Activated CD4-positive, alpha-beta T cell treated with anti-CD3 and anti-CD28 coated beads for 36 hours (primary cell): ENCODE measurements at regions of chr2 and their contacts with region 1.

Region 1: DNA sequence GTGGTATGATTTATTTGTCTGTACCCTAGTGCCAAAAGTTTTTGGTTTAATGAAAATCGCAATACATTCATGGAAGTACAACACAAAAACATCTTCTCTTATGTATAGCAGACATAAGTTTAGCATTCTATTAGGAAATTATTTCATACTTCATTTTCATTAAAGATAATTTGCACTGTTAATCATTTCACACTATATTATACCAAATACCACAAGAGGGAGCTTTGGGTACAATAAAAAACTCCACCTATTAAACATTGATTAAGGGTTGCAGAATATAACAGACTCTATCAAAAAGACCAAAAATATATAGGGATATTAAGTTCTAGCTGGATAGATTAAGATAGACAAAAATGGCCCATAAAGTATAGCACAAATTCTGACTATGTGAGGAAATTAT is 79.0 kb downstream of the SLC66A3 start:
- DNase-seq: no peak
- ATAC-seq: no peak
- H3K4me3 Mint-ChIP-seq: no peak overlapping the region
- H3K27ac Mint-ChIP-seq: no peak overlapping the region
- H3K4me1 Mint-ChIP-seq: peaks cover 11% of the 10 kb centered on the region
- H3K27me3 Mint-ChIP-seq: no peaks in the 10 kb centered on the region

Region 2: GRCh38 chr2:10995366-10995970 is 238.8 kb before region 1 on chr2:
- CTCF ChIA-PET with region 1: no interaction called
- POLR2A ChIA-PET with region 1: no interaction called
- intact Hi-C with region 1: no loop called
- DNase-seq: no peak
- ATAC-seq: no peak
- H3K4me3 Mint-ChIP-seq: no peak overlapping the region
- H3K27ac Mint-ChIP-seq: no peak overlapping the region
- H3K4me1 Mint-ChIP-seq: no peaks in the 10 kb centered on the region
- H3K27me3 Mint-ChIP-seq: no peaks in the 10 kb centered on the region

Region 3: GRCh38 chr2:11344342-11344955 is 110.1 kb after region 1 on chr2 and contains the start of gene ROCK2:
- CTCF ChIA-PET with region 1: no interaction called
- POLR2A ChIA-PET with region 1: interaction called, 7 read pairs
- intact Hi-C with region 1: loop called in 1 of 2 experiments (anchors 10 kb)
- DNase-seq: peak; percentile 81
- ATAC-seq: peak; percentile 68
- H3K4me3 Mint-ChIP-seq: peak within 1 kb of the TSS; percentile 97
- H3K27ac Mint-ChIP-seq: peak within 1 kb of the TSS; percentile 89
- H3K4me1 Mint-ChIP-seq: peaks cover 31% of the 10 kb centered on the region
- H3K27me3 Mint-ChIP-seq: no peaks in the 10 kb centered on the region
- total RNA-seq, gene ROCK2: 14.4 to 16.7 TPM

Region 4: DNA sequence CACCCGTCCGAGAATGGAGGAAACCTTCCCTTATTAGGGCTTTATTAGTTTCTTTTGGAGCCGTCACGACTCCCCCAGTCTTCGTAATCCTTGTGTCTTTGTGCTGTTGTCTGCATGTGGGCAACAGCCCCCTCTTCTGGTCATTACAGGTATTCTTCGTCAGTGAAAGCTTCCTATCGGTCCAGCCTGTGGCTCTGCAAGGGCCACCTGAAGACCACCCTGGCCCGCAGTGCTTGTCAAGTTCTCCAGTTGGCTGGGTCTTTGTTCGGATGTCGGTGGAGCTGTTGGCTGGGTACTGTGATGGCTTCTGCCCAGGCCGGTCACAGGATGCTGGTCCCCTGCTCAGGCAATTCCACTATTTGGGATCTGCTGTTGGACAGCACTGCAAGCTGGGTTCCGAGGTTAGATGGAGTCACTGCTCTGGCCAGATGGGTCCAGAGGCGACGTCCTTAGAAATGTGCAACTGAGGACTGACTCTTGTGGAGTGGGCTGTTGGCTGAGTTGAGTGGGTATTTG is 212.5 kb after region 1 on chr2:
- CTCF ChIA-PET with region 1: no interaction called
- POLR2A ChIA-PET with region 1: no interaction called
- intact Hi-C with region 1: loop called (anchors 1 to 2 kb)
- DNase-seq: peak; percentile 62
- ATAC-seq: peak; percentile 66
- H3K4me3 Mint-ChIP-seq: no peak overlapping the region
- H3K27ac Mint-ChIP-seq: no peak overlapping the region
- H3K4me1 Mint-ChIP-seq: no peaks in the 10 kb centered on the region
- H3K27me3 Mint-ChIP-seq: no peaks in the 10 kb centered on the region